Common myeloid progenitor, CD34-positive (primary cell): ENCODE measurements at regions of chr1 and their contacts with region 1.

Region 1: DNA sequence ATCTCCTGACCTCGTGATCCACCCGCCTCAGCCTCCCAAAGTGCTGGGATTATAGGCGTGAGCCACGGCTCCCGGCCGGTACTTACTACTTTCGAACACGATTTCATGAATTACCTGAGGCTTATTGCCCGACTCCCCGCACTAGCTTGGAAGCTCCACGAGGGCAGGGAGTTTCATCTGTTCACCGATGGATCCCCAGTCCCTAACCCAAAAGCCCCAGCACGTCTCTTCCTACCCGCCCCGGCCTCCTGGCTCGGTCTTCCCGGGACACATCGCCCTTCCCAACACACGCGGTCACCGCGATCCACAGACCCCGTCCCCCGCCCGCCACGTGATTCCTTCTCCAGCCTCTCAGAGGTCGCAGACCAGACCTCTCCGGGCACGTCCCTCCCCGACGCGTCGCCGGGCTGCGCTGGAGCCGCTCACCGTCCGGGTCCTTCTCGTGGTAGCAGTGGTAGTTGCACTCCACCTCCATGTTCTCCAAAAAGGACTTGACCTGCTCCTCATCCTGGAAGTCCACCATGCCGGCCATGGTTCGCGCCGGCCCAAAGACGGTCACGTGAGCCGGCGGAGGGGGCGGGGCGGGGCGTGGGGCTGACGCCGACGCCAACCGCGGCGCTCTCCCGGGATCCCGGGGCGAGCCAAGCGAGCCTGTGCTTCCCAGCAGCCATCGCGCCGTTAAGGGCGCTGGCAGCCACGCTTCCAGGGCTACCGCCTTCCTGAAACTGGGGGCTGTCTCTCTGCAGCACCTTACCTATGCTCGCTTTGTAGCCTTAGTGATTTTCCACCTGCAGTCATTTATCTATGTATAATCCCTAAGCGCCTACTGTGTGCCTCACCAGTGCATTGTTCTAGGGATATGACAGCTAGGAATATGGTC is at the start of gene COA7:
- DNase-seq: peak; percentile 52 to 68 (median 54)
- H3K4me3 ChIP-seq: peak within 1 kb of the TSS; percentile 51 to 84 (median 79)
- H3K27ac ChIP-seq: peak within 1 kb of the TSS in 1 of 2 experiments; percentile 58
- H3K4me1 ChIP-seq: peaks cover 2 to 17% (median 13%) of the 10 kb centered on the region in 4 experiments
- H3K27me3 ChIP-seq: no peaks in the 10 kb centered on the region

Region 2: GRCh38 chr1:52669696-52670095 is 28.3 kb before region 1 on chr1:
- CTCF ChIA-PET with region 1: no interaction called
- POLR2A ChIA-PET with region 1: no interaction called
- DNase-seq: no peak
- H3K4me3 ChIP-seq: no peak overlapping the region
- H3K27ac ChIP-seq: no peak overlapping the region
- H3K4me1 ChIP-seq: peaks cover 1 to 9% (median 4%) of the 10 kb centered on the region in 4 experiments
- H3K27me3 ChIP-seq: no peaks in the 10 kb centered on the region

Region 3: DNA sequence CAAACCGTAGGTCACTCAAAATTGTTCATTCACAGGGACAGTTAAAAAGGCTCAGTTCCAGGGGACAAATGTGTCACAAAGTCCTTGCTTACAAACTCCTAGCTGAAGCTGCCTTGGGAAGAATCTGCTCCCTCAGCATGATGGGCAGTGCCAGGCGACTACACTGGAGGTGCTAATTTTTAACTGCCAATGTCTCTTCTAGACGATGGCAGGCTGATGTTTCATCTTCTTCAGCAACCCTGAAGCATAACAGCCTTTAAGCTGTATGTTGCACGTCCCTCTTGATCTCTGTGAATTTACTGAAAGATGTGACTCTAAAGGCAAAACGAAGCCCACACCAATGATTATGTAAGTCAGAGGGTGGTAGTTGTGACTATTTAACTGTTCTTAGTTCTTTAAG is 11.2 kb before region 1 on chr1:
- CTCF ChIA-PET with region 1: interaction called, 14 read pairs
- POLR2A ChIA-PET with region 1: no interaction called
- DNase-seq: no peak
- H3K4me3 ChIP-seq: no peak overlapping the region
- H3K27ac ChIP-seq: no peak overlapping the region
- H3K4me1 ChIP-seq: peaks cover 0 to 1% (median 0%) of the 10 kb centered on the region in 4 experiments
- H3K27me3 ChIP-seq: no peaks in the 10 kb centered on the region

Region 4: DNA sequence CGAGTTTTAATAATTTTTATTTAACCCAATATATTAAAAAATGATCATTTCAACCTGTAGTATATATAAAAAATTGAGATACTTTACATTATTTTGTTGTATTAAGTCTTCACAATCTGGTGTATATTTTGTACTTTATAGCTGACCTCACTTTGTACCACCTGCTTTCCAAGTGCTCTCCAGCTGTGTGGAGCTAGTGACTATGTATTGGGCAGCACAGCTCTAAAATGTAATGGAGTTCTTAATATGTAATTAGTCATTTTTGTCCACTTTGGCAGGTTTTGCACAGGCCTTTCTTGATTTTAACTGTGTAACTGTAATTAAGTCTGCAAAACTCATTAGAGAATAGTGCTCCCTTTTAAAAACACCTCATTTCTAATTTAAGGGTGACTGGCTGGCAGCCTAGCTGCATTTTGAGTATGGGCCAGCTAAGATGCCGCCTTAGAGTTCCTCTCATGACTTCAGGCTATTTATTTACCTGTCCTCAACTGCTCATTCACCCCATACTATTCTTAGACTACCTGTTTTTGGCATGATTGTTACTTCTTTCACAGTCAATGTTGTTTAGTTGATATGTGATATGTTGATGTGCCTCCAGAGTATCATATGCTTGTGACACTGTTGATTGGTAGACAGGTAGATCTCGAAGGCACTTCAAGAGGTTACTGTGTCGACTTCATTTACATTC is 71.5 kb after region 1 on chr1:
- CTCF ChIA-PET with region 1: no interaction called
- POLR2A ChIA-PET with region 1: no interaction called
- DNase-seq: no peak
- H3K4me3 ChIP-seq: no peak overlapping the region
- H3K27ac ChIP-seq: no peak overlapping the region
- H3K4me1 ChIP-seq: peaks cover 0 to 6% (median 5%) of the 10 kb centered on the region in 4 experiments
- H3K27me3 ChIP-seq: no peaks in the 10 kb centered on the region